Activated naive CD4-positive, alpha-beta T cell treated with anti-CD3 and anti-CD28 coated beads for 36 hours (primary cell): ENCODE measurements at regions of chr1 and their contacts with region 1.

Region 1: DNA sequence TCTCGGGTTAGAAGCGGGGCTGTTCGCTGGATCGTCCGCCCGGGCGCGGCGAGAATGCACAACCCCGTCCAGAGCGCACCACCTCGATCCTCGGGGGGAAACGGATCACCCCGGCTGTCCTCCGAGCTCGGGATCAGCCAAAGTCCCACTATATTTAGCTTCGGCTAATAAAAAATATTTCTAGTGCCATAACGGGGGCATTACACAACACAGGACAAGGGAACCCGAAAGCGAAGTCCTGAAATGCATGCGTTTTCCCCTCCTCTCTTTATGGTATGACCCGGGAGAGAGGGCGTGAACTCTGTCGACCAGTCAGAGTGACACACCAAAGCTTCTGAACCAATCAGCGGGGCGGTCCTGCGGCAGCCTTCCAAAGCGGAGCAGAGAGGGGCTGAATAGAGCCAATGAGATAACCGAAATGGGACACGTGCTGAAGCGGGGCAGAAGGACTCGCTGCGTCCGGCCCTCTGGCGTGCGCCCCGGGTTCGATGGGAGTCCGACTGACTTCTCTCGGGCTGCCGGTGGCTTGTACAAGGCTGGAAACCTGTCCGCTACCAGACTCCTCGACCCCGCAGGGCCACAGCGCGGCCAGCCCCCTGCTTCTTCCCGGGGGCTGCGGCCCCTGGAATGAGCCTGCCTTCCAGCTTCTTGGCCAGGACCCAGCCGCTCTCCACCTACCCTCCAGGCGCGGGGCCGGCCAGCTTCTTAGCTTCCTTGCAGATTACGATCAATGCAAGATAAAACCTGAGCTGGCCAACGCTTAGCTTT is at the start of gene ALDH4A1:
- DNase-seq: peak; percentile 97
- H3K4me3 Mint-ChIP-seq: peak within 1 kb of the TSS; percentile 91
- H3K27ac Mint-ChIP-seq: peak within 1 kb of the TSS; percentile 96
- H3K4me1 Mint-ChIP-seq: peaks cover 30% of the 10 kb centered on the region
- H3K27me3 Mint-ChIP-seq: no peaks in the 10 kb centered on the region
- total RNA-seq, gene ALDH4A1: 11.6 to 12.5 TPM

Region 2: GRCh38 chr1:18913065-18913835 is 10.5 kb after region 1 on chr1:
- CTCF ChIA-PET with region 1: interaction called, 16 read pairs
- intact Hi-C with region 1: no loop called
- DNase-seq: peak; percentile 86
- H3K4me3 Mint-ChIP-seq: no peak overlapping the region
- H3K27ac Mint-ChIP-seq: peak overlapping the region; percentile 85
- H3K4me1 Mint-ChIP-seq: peaks cover 25% of the 10 kb centered on the region
- H3K27me3 Mint-ChIP-seq: no peaks in the 10 kb centered on the region

Region 3: DNA sequence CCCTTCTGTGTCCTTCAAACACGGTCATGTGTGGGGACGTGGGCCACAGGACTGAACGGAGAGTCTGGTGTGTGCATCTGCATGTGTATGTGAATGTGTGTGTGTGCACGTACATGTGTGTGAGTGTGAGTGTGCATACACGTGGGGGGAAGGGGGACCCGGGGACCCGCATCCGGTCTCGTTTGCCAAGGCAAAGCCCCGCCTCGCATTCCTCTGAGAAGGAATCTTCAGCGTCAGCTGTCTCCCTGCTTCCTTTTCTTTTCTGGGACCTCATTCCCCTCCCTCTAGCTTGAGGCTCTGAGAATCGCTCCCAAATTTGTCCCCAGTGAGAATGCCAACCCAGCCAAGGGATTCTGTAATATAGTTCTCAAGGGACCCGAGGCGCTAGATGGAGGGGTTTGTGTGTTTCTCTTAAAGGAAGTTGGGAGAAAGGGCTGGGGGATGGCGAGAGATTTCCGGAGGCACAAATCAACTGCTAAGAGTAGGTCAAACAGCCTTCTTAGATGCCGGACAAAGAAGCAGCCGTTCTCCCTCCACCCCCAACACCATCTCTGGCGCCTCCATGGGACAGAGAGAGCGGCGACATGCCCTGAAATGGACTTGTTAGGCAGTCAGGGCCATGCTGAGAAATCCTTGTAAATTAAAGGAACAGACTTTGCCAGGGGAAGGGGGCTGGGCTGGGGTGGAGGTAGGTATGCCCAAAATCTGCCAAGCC is 47.1 kb after region 1 on chr1:
- CTCF ChIA-PET with region 1: interaction called, 28 read pairs
- intact Hi-C with region 1: loop called (anchors 2 kb)
- DNase-seq: peak; percentile 45
- H3K4me3 Mint-ChIP-seq: peak overlapping the region; percentile 75
- H3K27ac Mint-ChIP-seq: peak overlapping the region; percentile 93
- H3K4me1 Mint-ChIP-seq: peaks cover 95% of the 10 kb centered on the region
- H3K27me3 Mint-ChIP-seq: no peaks in the 10 kb centered on the region

Region 4: GRCh38 chr1:18972531-18972930 is 69.8 kb after region 1 on chr1:
- CTCF ChIA-PET with region 1: interaction called, 21 read pairs
- intact Hi-C with region 1: loop called (anchors 1 kb)
- DNase-seq: no peak
- H3K4me3 Mint-ChIP-seq: no peak overlapping the region
- H3K27ac Mint-ChIP-seq: no peak overlapping the region
- H3K4me1 Mint-ChIP-seq: peaks cover 3% of the 10 kb centered on the region
- H3K27me3 Mint-ChIP-seq: no peaks in the 10 kb centered on the region

Region 5: GRCh38 chr1:19044975-19045831 is 142.5 kb after region 1 on chr1:
- CTCF ChIA-PET with region 1: no interaction called
- intact Hi-C with region 1: no loop called
- DNase-seq: no peak
- H3K4me3 Mint-ChIP-seq: no peak overlapping the region
- H3K27ac Mint-ChIP-seq: no peak overlapping the region
- H3K4me1 Mint-ChIP-seq: no peaks in the 10 kb centered on the region
- H3K27me3 Mint-ChIP-seq: no peaks in the 10 kb centered on the region

Region 6: DNA sequence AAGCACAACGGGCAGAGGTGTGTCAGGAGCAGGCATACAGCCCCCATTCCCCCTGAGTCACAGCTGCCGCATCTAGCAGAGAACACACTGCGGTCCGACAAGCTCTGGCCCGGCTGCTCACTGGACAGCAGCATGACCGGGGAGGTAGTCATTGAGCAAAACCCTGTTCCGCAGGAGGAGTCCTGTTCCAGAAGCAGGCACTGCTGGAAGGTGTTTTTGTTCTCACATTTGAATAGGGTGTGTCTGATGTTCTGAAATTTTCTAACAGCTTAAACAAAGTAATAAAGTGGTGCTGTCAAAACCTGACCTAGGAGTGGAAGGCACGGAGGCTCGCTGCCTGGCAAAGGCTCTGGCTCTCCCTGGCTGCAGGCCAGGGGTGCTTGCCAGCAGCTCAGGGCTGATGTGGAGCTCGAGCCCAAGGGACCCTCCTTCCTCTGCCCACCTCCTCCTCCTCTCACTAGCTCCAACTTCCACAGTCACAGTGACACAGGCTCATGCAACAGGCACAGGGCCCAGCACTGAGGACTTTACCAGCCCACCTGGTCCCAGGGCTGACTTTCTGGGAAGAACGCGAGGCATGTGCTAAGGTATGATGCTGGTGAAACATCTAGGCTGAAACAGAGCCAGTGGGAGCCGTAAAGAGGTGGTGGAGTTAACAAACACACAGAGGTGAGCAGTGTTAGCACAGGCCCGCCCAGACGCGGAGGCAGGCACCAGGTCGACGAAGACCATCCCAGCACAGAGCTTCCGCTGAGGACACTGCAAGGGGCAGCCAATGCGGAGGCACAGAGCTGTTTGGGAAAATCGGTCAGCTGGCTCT is 172.4 kb after region 1 on chr1:
- CTCF ChIA-PET with region 1: interaction called, 20 read pairs
- intact Hi-C with region 1: loop called (anchors 2 kb)
- DNase-seq: no peak
- H3K4me3 Mint-ChIP-seq: no peak overlapping the region
- H3K27ac Mint-ChIP-seq: peak overlapping the region; percentile 74
- H3K4me1 Mint-ChIP-seq: peaks cover 53% of the 10 kb centered on the region
- H3K27me3 Mint-ChIP-seq: no peaks in the 10 kb centered on the region

Region 7: DNA sequence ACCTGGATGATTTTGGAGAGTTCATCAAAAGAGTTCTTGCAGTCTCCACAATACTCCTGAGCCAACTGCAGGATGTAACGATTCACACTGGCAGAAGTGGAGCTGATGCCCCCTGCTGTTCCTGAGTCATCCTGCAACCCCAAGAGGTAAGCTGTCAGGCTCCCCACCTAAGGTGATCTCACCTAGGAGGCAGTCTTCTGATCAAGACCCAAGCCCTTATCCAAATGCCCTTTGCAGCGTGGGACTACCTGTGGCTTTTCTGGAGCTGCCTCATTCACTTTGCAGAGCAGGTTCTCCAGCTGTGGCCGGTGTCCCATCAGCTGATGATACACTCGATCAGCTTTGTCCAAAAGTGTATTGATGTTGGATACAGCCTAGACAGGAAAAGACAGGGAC is 211.0 kb after region 1 on chr1:
- CTCF ChIA-PET with region 1: interaction called, 5 read pairs
- intact Hi-C with region 1: loop called (anchors 2 kb)
- DNase-seq: peak; percentile 58
- H3K4me3 Mint-ChIP-seq: no peak overlapping the region
- H3K27ac Mint-ChIP-seq: peak overlapping the region; percentile 37
- H3K4me1 Mint-ChIP-seq: no peaks in the 10 kb centered on the region
- H3K27me3 Mint-ChIP-seq: no peaks in the 10 kb centered on the region

Region 8: DNA sequence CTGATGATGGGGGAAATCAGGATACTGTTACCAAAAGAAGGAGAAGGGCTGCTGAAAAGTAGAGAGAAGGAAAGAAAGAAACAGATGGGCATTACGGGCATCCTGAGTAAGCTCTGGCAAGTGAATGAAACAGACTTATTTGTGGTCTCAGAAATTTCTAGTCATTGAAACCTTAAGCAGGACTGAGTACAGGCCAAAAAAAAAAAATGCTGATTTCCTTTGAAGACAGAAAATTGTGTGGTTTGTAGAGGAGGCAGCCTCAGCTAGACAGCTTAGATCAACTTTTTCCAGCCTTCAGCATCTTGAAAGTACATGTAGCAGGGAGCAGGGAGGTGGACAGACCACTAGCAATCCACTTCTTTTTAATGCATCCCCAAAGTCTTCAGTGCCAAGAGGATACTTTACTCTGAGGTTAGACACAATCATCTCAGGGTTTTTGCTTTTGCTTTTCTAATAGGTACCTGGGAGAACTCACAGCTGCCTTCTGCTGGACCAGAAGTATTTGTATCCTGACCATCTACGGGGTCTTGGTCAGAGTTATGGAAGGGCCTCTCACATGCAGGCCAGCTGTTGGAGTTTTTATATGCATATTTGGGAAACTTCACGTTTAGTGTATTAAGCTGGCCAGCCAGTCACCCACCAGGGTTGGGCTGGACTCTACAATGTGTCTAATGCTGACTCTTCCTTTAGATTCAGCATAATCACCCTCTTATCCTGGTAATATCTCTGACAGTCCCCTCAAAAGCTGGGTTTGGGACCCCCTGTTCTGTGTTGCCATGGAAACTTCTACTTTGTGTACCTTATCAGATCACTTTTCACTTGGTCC is 593.3 kb after region 1 on chr1:
- CTCF ChIA-PET with region 1: no interaction called
- intact Hi-C with region 1: no loop called
- DNase-seq: no peak
- H3K4me3 Mint-ChIP-seq: no peak overlapping the region
- H3K27ac Mint-ChIP-seq: no peak overlapping the region
- H3K4me1 Mint-ChIP-seq: peaks cover 11% of the 10 kb centered on the region
- H3K27me3 Mint-ChIP-seq: no peaks in the 10 kb centered on the region

Region 9: DNA sequence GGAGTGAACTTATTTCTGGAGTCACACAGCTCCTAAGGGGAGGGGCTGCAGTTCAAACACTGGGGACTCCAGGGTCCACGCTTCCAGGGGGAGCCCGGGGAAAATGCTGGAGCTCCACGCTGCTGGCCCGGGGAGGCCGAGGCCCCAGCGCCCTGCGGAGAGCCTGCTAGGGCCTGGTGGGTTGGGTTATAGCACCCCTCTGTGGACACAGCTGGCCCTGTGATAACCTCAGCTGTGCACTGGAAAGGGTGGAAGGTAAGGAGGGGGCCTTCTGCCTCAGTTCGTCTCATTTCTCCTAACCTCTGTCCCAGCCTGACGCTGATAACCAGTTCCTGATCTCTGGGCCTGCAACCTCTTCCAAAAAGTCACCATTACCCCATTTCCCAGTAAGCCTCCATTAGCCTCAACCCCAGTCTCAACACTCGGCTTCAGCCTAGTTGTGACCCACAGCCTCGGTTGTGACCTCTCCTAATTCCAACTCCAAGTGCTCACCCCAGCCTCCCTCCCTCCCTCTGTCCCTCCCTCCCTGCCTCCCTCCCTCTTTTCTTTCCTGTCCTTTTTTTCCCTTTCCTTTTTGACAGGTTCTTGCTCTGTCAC is 748.5 kb after region 1 on chr1:
- CTCF ChIA-PET with region 1: no interaction called
- intact Hi-C with region 1: loop called (anchors 10 kb)
- DNase-seq: peak; percentile 74
- H3K4me3 Mint-ChIP-seq: no peak overlapping the region
- H3K27ac Mint-ChIP-seq: no peak overlapping the region
- H3K4me1 Mint-ChIP-seq: peaks cover 33% of the 10 kb centered on the region
- H3K27me3 Mint-ChIP-seq: no peaks in the 10 kb centered on the region

Region 10: GRCh38 chr1:19682257-19682656 is 779.5 kb after region 1 on chr1:
- CTCF ChIA-PET with region 1: no interaction called
- intact Hi-C with region 1: no loop called
- DNase-seq: no peak
- H3K4me3 Mint-ChIP-seq: no peak overlapping the region
- H3K27ac Mint-ChIP-seq: no peak overlapping the region
- H3K4me1 Mint-ChIP-seq: peaks cover 1% of the 10 kb centered on the region
- H3K27me3 Mint-ChIP-seq: no peaks in the 10 kb centered on the region